ENCODE measurements at regions of chr6 and their contacts with region 1.

Region 1: GRCh38 chr6:138115877-138116660 is 8.8 kb upstream of the PERP start:
- DNase-seq: no peak
- H3K4me3 ChIP-seq: no peak overlapping the region
- CTCF ChIP-seq: peak; percentile 40

Region 2: DNA sequence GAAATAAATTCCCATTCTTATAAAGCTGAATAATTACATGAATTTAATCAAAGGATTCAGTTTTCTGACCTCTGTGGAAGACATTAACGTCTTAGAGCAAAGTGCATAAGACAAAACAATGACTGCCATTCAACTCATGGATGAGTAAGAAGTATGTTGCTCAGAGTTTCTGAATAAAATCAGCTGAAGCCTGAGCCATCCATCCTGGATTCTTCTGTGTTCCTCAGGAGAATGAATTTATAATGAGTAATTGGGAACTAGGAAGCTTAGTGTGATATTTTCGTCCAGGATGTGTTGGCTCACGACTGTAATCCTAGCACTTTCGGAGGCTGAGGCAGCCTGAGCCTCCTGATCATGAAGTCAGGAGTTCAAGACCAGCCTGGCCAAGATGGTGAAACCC is 71.6 kb before region 1 on chr6:
- CTCF ChIA-PET with region 1: no interaction called
- POLR2A ChIA-PET with region 1: no interaction called
- DNase-seq: no peak
- H3K4me3 ChIP-seq: no peak overlapping the region
- CTCF ChIP-seq: no peak

Region 3: DNA sequence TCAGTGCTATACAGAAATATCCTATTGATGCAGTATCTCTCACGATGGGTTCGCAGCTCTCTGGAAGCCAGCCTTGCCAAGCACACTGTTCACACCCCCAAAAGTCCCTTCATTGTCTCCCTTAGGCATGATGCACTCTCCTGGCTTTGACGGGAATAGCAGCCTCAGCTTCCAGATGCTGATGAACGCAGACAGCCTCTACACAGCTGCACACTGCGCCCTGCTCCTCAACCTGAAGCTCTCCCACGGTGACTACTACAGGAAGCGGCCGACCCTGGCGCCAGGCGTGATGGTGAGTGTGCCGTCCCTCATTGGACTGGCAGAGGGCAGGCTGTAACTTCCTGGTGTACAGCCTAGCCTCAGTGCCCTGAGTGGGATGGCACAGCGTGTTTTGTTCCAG is 162.3 kb after region 1 on chr6:
- CTCF ChIA-PET with region 1: interaction called, 31 read pairs
- POLR2A ChIA-PET with region 1: no interaction called
- DNase-seq: no peak
- H3K4me3 ChIP-seq: no peak overlapping the region
- CTCF ChIP-seq: peak; percentile 41

Region 4: GRCh38 chr6:138428944-138429598 is 313.0 kb after region 1 on chr6:
- CTCF ChIA-PET with region 1: interaction called, 35 read pairs
- POLR2A ChIA-PET with region 1: interaction called, 4 read pairs
- DNase-seq: peak; percentile 24
- H3K4me3 ChIP-seq: no peak overlapping the region
- CTCF ChIP-seq: peak; percentile 27

Region 5: GRCh38 chr6:138509371-138509770 is 393.3 kb after region 1 on chr6:
- CTCF ChIA-PET with region 1: interaction called, 58 read pairs
- POLR2A ChIA-PET with region 1: no interaction called
- DNase-seq: no peak
- H3K4me3 ChIP-seq: no peak overlapping the region
- CTCF ChIP-seq: peak; percentile 21

Region 6: GRCh38 chr6:138588805-138589434 is 472.9 kb after region 1 on chr6:
- CTCF ChIA-PET with region 1: interaction called, 40 read pairs
- POLR2A ChIA-PET with region 1: no interaction called
- DNase-seq: no peak
- H3K4me3 ChIP-seq: no peak overlapping the region
- CTCF ChIP-seq: peak; percentile 90

Region 7: DNA sequence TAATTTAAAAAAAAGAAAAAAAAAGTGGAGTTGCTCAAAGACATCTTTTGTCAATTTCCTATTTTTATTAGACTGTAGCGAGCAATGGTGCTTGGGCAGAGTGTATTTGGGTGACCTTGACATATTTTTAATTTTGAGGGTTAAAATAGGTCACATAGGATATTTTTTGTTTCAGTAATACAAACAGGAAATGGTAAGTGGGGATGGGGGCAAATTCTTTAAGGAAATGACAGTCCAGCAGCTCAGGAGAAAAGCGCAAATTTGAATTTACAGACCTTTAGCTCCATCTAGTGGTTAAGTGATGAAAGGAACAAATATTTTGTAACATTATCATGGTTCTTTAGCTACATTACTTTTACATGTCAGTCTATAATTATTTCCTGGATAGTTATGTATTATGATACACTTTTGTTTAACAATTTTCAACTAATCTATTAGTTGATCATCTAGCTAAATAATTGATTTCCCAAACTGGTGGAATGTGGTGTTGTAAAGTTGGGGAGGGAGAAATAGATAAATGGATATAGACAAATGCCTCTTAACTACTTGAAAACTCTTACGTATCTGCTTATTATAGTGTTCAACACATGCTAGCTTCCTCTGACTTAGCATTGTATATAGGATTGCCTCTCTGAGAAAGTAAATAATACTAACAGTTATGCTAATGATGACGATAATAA is 1248.4 kb after region 1 on chr6:
- CTCF ChIA-PET with region 1: interaction called, 10 read pairs
- POLR2A ChIA-PET with region 1: no interaction called
- DNase-seq: no peak
- H3K4me3 ChIP-seq: no peak overlapping the region
- CTCF ChIP-seq: peak; percentile 16